CD14-positive monocyte (primary cell): ENCODE measurements at regions of chr2 and their contacts with region 1.

Region 1: GRCh38 chr2:28981016-28981441 is at the start of gene TOGARAM2:
- DNase-seq: no peak
- H3K4me3 ChIP-seq: no peak within 1 kb of the TSS
- H3K4me3 Mint-ChIP-seq: no peak within 1 kb of the TSS
- H3K27ac ChIP-seq: no peak within 1 kb of the TSS
- H3K27ac Mint-ChIP-seq: peak within 1 kb of the TSS in 4 of 7 donors; percentile 35 to 56 (median 44)
- H3K4me1 ChIP-seq: no peaks in the 10 kb centered on the region
- H3K4me1 Mint-ChIP-seq: no peaks in the 10 kb centered on the region
- H3K27me3 ChIP-seq: no peaks in the 10 kb centered on the region
- H3K27me3 Mint-ChIP-seq: peaks cover 0 to 1% (median 0%) of the 10 kb centered on the region in 3 donors
- CTCF ChIP-seq: no peak
- polyA plus RNA-seq, gene TOGARAM2: 0.23 to 5.5 TPM in 2 of 3 donors, not detected in the other

Region 2: GRCh38 chr2:28810384-28811285 is 170.4 kb before region 1 on chr2 and contains the start of gene SPDYA:
- intact Hi-C with region 1: no loop called
- DNase-seq: peak; percentile 42 to 59 (median 56)
- H3K4me3 ChIP-seq: peak within 1 kb of the TSS; percentile 40 to 76 (median 45)
- H3K4me3 Mint-ChIP-seq: peak within 1 kb of the TSS; percentile 77 to 85
- H3K27ac ChIP-seq: no peak within 1 kb of the TSS
- H3K27ac Mint-ChIP-seq: peak within 1 kb of the TSS in 1 of 7 donors; percentile 64
- H3K4me1 ChIP-seq: peaks cover 13 to 20% of the 10 kb centered on the region in 2 donors
- H3K4me1 Mint-ChIP-seq: peaks cover 16% of the 10 kb centered on the region
- H3K27me3 ChIP-seq: peaks cover 0 to 8% of the 10 kb centered on the region in 2 donors
- H3K27me3 Mint-ChIP-seq: peaks cover 7 to 17% (median 11%) of the 10 kb centered on the region in 3 donors
- CTCF ChIP-seq: no peak
- polyA plus RNA-seq, gene SPDYA: 0.15 TPM in 1 of 3 donors, not detected in the others

Region 3: GRCh38 chr2:29033172-29033571 is 52.1 kb after region 1 on chr2:
- intact Hi-C with region 1: loop called in 1 of 2 experiments (anchors 10 kb)
- DNase-seq: no peak
- H3K4me3 ChIP-seq: no peak overlapping the region
- H3K4me3 Mint-ChIP-seq: no peak overlapping the region
- H3K27ac ChIP-seq: no peak overlapping the region
- H3K27ac Mint-ChIP-seq: no peak overlapping the region
- H3K4me1 ChIP-seq: peaks cover 0 to 9% of the 10 kb centered on the region in 2 donors
- H3K4me1 Mint-ChIP-seq: peaks cover 11% of the 10 kb centered on the region
- H3K27me3 ChIP-seq: no peaks in the 10 kb centered on the region
- H3K27me3 Mint-ChIP-seq: peaks cover 0 to 13% (median 2%) of the 10 kb centered on the region in 3 donors
- CTCF ChIP-seq: no peak

Region 4: DNA sequence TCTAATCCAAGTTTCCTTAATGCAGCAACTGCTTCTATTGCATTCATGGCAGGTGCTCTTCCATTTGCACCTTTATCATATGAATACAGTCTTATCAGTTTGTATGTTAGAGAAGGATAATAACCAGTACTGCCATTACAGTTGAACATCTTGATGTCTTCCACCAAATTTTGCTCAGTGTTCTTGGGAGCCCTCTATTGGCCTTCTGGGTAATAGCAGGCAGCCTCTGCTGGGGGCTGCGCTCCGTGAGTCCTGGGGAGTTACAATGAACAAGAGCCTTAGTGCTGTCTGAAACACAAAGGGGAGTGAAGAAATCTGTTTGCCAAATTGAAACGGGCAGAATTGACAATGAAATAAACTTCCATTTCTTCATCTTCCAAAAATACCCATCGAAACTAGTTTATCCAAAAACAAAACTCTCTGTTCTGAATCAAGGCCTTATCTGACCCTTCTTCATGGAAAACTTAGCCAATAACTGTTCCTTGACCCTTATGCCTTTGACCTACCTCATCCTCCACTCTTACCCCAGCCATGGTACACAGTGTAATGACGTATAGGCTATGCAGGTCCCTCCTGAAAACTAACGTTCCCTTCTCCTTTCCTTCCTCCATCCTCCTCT is 860.5 kb after region 1 on chr2:
- intact Hi-C with region 1: loop called in 1 of 2 experiments (anchors 10 kb)
- DNase-seq: peak in 2 of 3 donors; percentile 2 to 11
- H3K4me3 ChIP-seq: no peak overlapping the region
- H3K4me3 Mint-ChIP-seq: no peak overlapping the region
- H3K27ac ChIP-seq: no peak overlapping the region
- H3K27ac Mint-ChIP-seq: no peak overlapping the region
- H3K4me1 ChIP-seq: no peaks in the 10 kb centered on the region
- H3K4me1 Mint-ChIP-seq: no peaks in the 10 kb centered on the region
- H3K27me3 ChIP-seq: no peaks in the 10 kb centered on the region
- H3K27me3 Mint-ChIP-seq: peaks cover 0 to 7% (median 3%) of the 10 kb centered on the region in 3 donors
- CTCF ChIP-seq: peak; percentile 89